Heart left ventricle (tissue), 16 donors: ENCODE measurements at regions of chr2 and their contacts with region 1.

Region 1: DNA sequence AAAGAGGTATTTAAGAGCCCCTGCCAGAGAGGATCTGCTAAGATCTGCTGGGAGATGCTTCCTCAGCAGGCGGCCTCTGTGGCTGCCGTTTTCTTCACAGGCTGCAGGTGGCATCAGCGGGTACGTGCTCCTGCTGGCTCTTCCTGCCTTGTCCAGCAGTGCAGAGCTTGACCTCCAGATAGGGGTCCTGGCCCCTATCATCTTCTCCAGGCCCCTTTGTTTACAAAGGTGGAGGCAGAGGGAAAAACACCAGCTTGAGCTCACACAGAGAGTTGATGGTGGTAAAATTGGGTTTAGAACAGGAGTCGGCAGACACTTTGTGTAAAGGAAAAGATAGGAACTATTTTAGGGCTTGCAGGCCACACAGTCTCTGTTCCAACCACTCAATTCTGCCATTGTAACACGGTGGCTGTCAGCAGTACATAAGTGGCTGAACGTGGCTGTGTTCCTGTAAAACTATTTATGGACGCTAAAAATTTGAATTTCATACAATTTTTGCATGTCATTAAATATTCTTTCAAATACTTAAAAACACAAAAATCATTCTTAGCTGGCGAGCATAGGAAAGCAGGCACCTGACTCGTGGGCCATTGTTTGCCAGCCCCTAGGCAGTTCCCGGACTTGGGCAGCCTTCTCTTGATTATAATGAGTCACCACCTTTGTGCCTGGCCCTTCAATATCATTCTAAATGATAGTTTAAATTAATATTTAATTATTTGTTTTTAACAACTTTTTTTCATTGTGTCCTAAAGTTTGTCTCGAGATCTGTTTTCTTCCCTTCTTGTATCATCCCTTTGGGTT is 98.2 kb upstream of the B3GNT7 start:
- DNase-seq: peak; percentile 45 to 77 (median 61)
- ATAC-seq: peak; percentile 39 to 79 (median 76)
- H3K4me3 ChIP-seq: no peak overlapping the region
- H3K27ac ChIP-seq: peak overlapping the region in 7 of 12 donors; percentile 23 to 55 (median 29)
- H3K4me1 ChIP-seq: peaks cover 0 to 39% (median 6%) of the 10 kb centered on the region in 12 donors
- H3K27me3 ChIP-seq: no peaks in the 10 kb centered on the region
- CTCF ChIP-seq: peak; percentile 39 to 78 (median 68)
- POLR2A ChIP-seq: no peak

Region 2: GRCh38 chr2:231245253-231246094 is 51.8 kb before region 1 on chr2:
- intact Hi-C with region 1: loop called in 1 of 10 experiments (anchors 5 kb)
- DNase-seq: no peak
- ATAC-seq: peak in 2 of 4 donors; percentile 36 to 46
- H3K4me3 ChIP-seq: no peak overlapping the region
- H3K27ac ChIP-seq: no peak overlapping the region
- H3K4me1 ChIP-seq: peaks cover 0 to 7% (median 0%) of the 10 kb centered on the region in 12 donors
- H3K27me3 ChIP-seq: no peaks in the 10 kb centered on the region
- CTCF ChIP-seq: peak in 8 of 12 donors; percentile 6 to 43 (median 21)
- POLR2A ChIP-seq: no peak

Region 3: GRCh38 chr2:231394211-231395141 is 97.2 kb after region 1 on chr2:
- intact Hi-C with region 1: loop called in 5 of 10 experiments (anchors 5 kb)
- DNase-seq: no peak
- ATAC-seq: no peak
- H3K4me3 ChIP-seq: peak overlapping the region in 1 of 12 donors; percentile 57
- H3K27ac ChIP-seq: no peak overlapping the region
- H3K4me1 ChIP-seq: peaks cover 0 to 26% (median 4%) of the 10 kb centered on the region in 12 donors
- H3K27me3 ChIP-seq: peaks cover 0 to 23% (median 5%) of the 10 kb centered on the region in 9 donors
- CTCF ChIP-seq: peak in 2 of 12 donors; percentile 13 to 20
- POLR2A ChIP-seq: no peak

Region 4: DNA sequence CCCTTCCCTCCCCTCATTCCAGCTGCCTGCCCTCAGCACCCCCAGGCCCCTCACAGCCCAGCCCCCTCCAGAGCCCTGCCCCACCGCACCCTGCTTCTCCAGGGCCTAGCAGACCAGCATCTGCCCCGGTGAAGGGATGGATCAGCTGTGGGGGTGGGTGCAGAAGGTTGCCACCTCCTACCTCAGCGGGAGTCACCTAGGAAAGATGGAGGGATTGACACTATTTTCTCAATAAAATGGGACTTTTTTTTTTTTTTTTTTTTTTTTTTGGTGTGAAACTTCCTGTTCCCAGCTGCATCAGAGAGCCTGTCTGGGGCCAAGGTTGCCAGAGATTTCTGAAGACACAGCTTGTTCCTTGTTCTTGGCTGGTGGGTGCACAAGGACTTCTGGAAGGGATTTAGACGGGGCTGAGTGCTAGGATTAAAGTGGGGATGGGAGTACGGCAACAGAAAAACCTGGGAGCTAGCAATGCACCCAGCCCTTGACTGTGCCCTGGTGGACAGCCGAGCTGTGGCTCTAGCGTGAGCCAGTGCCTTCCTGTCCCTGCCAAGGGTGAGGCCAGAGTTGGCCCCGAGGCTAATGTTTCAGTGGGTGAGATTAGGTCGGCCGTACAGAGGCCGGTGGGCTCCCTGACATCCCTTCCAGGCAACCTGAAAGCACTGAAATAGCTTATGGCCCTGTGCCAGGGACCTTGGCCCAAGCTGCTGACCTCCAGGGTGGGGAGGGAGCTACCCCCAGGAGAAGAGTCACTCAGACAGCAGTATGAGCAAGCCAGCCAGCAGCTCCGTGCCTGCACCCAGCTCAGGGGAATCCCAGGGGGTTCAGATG is 102.8 kb after region 1 on chr2:
- intact Hi-C with region 1: loop called in 8 of 10 experiments (anchors 2 to 5 kb)
- DNase-seq: peak in 4 of 5 donors; percentile 47 to 81 (median 62)
- ATAC-seq: peak; percentile 87 to 92 (median 89)
- H3K4me3 ChIP-seq: peak overlapping the region in 1 of 12 donors; percentile 4
- H3K27ac ChIP-seq: peak overlapping the region in 11 of 12 donors; percentile 2 to 83 (median 54)
- H3K4me1 ChIP-seq: peaks cover 0 to 41% (median 14%) of the 10 kb centered on the region in 12 donors
- H3K27me3 ChIP-seq: peaks cover 0 to 16% (median 3%) of the 10 kb centered on the region in 9 donors
- CTCF ChIP-seq: peak in 7 of 12 donors; percentile 10 to 42 (median 30)
- POLR2A ChIP-seq: no peak

Region 5: DNA sequence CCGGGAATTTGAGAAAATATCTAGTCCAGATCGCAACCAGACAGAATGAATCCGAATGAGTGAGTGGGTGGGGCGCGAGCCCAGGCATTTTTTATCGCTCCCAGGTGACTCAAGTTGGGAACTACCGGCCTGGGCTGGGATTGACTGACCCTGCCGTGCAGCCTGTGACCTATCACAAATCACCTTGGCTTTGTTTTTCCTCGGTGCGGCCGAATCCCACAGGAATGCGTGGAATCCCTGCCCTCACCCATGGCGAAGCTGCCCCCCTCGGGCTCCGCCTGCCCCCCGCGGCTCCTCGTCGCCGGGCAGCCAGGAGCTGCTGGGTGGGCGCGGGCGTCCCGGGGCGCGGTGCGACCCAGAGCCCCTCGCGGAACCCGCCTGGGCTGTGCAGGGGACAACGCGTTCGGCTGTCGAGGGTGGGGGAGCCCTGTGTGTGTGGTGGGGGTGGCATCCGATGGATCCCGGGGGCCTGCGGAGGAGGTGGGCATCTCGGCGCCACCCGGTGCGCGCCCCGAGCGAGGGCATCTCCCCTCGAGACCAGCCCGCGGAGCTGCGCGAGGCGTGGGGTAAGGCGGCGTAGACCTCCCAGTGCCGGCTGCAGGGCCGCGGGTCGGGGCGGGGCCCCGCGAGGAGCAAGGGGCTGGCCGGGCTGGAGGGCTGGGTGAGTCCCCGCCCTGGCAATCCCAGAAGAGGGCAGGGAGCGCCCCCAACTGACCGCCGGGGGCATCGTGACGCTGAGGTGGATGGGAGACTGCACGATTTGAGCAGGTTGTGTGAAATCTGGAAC is 114.7 kb after region 1 on chr2:
- intact Hi-C with region 1: loop called in 3 of 10 experiments (anchors 5 kb)
- DNase-seq: peak; percentile 78 to 91 (median 85)
- ATAC-seq: peak; percentile 81 to 100 (median 99)
- H3K4me3 ChIP-seq: peak overlapping the region; percentile 29 to 79 (median 64)
- H3K27ac ChIP-seq: peak overlapping the region in 2 of 12 donors; percentile 10 to 33
- H3K4me1 ChIP-seq: peaks cover 0 to 16% (median 9%) of the 10 kb centered on the region in 12 donors
- H3K27me3 ChIP-seq: peaks cover 0 to 14% (median 4%) of the 10 kb centered on the region in 9 donors
- CTCF ChIP-seq: peak; percentile 67 to 96 (median 86)
- POLR2A ChIP-seq: no peak